PC-3 (cell line): ENCODE measurements at regions of chr2 and their contacts with region 1.

Region 1: DNA sequence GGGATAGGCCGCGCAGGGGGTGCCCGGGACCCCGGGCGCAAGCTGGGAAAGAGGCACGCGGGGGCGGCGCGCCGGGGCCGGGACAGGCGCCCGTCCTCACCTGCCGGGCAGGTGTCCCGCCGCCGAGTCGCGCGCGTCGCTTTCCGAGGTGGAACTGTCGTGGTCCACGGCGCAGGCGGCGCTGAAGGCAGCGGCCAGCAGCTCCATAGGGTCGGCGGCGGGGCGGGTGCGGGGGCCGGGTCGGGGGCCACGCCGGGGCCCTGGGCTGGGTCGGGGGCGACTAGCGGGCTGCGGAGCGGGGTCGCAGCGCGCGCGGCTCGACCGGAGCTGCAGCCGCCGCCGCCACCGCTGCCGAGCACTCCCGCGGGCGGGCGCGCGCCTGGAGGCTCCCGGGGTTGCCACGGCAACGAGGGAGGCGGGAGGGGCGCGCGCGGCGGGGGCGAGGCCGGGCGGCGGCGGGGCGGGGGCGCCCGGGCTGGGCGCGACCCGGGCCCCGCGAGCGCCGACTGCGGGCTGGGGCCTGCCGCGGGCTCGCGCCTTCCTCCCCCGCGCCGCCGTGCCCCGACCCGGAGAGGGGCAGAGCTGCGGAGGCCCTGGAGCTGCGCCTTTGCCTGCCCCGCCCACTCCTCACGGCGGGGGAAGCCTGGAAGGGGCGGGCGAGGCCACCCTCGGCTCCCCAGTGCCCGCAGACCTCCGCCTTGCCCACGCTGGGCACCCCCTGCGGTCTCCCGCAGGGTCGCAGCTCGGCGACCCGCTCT is 57.9 kb downstream of the SNORC start:
- DNase-seq: peak; percentile 40
- ATAC-seq: peak; percentile 13
- H3K4me3 ChIP-seq: peak overlapping the region; percentile 71
- H3K27ac ChIP-seq: peak overlapping the region; percentile 47; the same call in 1 of the 2 replicates
- H3K4me1 ChIP-seq: peaks cover 25% of the 10 kb centered on the region
- H3K27me3 ChIP-seq: no peaks in the 10 kb centered on the region
- CTCF ChIP-seq: no peak

Region 2: GRCh38 chr2:232200195-232200594 is 727.8 kb before region 1 on chr2:
- CTCF ChIA-PET with region 1: no interaction called
- POLR2A ChIA-PET with region 1: interaction called, 19 read pairs
- intact Hi-C with region 1: no loop called
- DNase-seq: peak; percentile 30
- ATAC-seq: peak; percentile 88
- H3K4me3 ChIP-seq: peak overlapping the region; percentile 14; the same call in 1 of the 2 replicates
- H3K27ac ChIP-seq: peak overlapping the region; percentile 76
- H3K4me1 ChIP-seq: peaks cover 17% of the 10 kb centered on the region
- H3K27me3 ChIP-seq: no peaks in the 10 kb centered on the region
- CTCF ChIP-seq: no peak

Region 3: GRCh38 chr2:232798187-232798586 is 129.8 kb before region 1 on chr2:
- CTCF ChIA-PET with region 1: no interaction called
- POLR2A ChIA-PET with region 1: no interaction called
- intact Hi-C with region 1: no loop called
- DNase-seq: no peak
- ATAC-seq: no peak
- H3K4me3 ChIP-seq: no peak overlapping the region
- H3K27ac ChIP-seq: no peak overlapping the region
- H3K4me1 ChIP-seq: no peaks in the 10 kb centered on the region
- H3K27me3 ChIP-seq: no peaks in the 10 kb centered on the region
- CTCF ChIP-seq: no peak

Region 4: DNA sequence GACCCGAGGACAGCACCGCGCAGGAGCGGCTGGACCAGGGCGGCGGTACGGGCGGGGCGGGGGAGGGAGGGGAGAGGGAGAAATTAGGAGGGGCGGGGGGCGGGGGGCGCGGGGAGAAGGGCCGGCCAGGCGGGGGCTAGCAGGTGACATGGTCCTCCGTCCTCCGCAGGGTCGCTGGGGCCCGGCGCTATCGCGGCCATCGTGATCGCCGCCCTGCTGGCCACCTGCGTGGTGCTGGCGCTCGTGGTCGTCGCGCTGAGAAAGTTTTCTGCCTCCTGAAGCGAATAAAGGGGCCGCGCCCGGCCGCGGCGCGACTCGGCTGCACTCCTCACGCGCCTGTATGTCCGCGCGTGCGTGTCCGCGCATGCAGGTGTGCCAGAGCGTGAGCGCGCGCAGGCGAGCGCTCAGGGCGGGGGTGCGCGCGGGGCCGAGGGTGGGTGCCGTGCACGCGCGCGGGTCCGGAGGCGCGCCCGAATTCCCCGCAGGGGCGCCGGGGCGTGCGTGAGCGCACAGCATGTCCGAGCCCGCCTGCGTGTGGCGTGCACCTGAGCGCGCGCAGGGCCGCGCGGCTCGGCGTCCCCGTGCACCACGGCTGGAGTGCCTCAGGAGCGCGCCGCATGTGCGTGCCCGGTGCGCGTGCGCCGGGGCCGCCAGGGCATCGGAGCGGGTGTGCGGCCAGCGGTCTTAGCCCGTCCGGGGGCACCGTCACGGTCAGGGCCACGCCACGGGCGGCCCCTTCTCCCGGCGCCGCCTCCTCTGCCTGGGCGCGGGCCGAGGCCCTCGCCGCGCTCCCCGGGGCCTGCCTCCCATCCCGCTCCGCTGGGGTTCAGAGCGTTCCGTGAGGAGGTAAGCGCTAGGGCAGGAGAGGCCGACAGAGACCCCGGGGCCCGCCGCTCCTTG is 51.6 kb before region 1 on chr2:
- CTCF ChIA-PET with region 1: no interaction called
- POLR2A ChIA-PET with region 1: interaction called, 9 read pairs
- intact Hi-C with region 1: loop called (anchors 2 kb)
- DNase-seq: peak; percentile 80
- ATAC-seq: peak; percentile 68
- H3K4me3 ChIP-seq: peak overlapping the region; percentile 85
- H3K27ac ChIP-seq: peak overlapping the region; percentile 12
- H3K4me1 ChIP-seq: peaks cover 17% of the 10 kb centered on the region
- H3K27me3 ChIP-seq: no peaks in the 10 kb centered on the region
- CTCF ChIP-seq: 0 out of 2 replicates have a peak, but pooled peaks have one; percentile 10

Region 5: GRCh38 chr2:232979871-232980461 is 52.0 kb after region 1 on chr2:
- CTCF ChIA-PET with region 1: no interaction called
- POLR2A ChIA-PET with region 1: interaction called, 4 read pairs
- intact Hi-C with region 1: loop called (anchors 5 kb)
- DNase-seq: peak; percentile 95
- ATAC-seq: peak; percentile 91
- H3K4me3 ChIP-seq: no peak overlapping the region
- H3K27ac ChIP-seq: peak overlapping the region; percentile 90
- H3K4me1 ChIP-seq: peaks cover 36% of the 10 kb centered on the region
- H3K27me3 ChIP-seq: no peaks in the 10 kb centered on the region
- CTCF ChIP-seq: peak; percentile 67